Naive thymus-derived CD8-positive, alpha-beta T cell (primary cell): ENCODE measurements at regions of chr9 and their contacts with region 1.

Region 1: GRCh38 chr9:4740638-4741364 is at the start of gene AK3:
- DNase-seq: peak; percentile 81 to 93 (median 86)
- ATAC-seq: peak; percentile 90 to 93
- H3K4me3 Mint-ChIP-seq: peak within 1 kb of the TSS; percentile 85 to 99 (median 94)
- H3K27ac Mint-ChIP-seq: peak within 1 kb of the TSS; percentile 90 to 99 (median 96)
- H3K4me1 Mint-ChIP-seq: peaks cover 15 to 46% (median 41%) of the 10 kb centered on the region in 4 donors
- H3K27me3 Mint-ChIP-seq: no peaks in the 10 kb centered on the region
- polyA plus RNA-seq, gene AK3: 41.6 to 58.8 (median 46.1) TPM

Region 2: DNA sequence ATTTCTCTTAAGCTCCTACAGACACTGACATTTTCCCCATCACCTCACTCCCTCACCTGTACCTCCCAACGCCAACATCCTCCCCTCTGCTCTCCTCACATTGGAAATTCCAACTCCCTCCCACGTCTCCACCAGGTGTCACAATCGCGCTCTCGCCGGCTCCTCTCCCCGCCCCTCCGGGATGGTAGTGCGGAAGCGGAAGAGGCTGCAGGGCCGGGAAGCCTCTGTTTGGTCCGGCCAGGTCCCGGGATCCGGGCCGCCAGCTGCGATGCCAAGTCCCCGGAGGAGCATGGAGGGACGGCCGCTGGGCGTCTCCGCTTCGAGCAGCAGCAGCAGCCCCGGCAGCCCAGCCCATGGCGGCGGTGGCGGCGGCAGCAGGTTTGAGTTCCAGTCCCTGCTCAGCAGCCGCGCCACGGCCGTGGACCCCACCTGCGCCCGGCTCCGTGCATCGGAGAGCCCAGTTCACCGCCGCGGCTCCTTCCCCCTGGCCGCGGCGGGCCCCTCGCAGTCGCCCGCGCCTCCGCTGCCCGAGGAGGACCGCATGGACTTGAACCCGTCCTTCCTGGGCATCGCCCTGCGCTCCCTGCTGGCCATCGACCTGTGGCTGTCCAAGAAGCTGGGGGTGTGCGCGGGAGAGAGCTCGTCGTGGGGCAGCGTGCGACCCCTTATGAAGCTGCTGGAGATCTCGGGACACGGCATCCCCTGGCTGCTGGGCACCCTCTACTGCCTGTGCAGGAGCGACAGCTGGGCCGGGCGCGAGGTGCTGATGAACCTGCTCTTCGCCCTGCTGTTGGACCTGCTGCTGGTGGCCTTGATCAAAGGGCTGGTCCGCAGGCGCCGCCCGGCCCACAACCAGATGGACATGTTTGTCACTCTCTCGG is 78.5 kb before region 1 on chr9 and contains the start of gene PLPP6:
- POLR2A ChIA-PET with region 1: interaction called, 42 read pairs
- DNase-seq: peak; percentile 60 to 90 (median 76)
- ATAC-seq: peak; percentile 68 to 74
- H3K4me3 Mint-ChIP-seq: peak within 1 kb of the TSS; percentile 89 to 99 (median 94)
- H3K27ac Mint-ChIP-seq: peak within 1 kb of the TSS; percentile 95 to 99 (median 96)
- H3K4me1 Mint-ChIP-seq: peaks cover 32 to 68% (median 59%) of the 10 kb centered on the region in 4 donors
- H3K27me3 Mint-ChIP-seq: peaks cover 0 to 6% (median 0%) of the 10 kb centered on the region in 5 donors
- polyA plus RNA-seq, gene PLPP6: 4.9 to 6.1 (median 5.8) TPM

Region 3: GRCh38 chr9:4679268-4680172 is 61.3 kb before region 1 on chr9 and contains the start of gene CDC37L1:
- POLR2A ChIA-PET with region 1: interaction called, 47 read pairs
- DNase-seq: peak; percentile 96 to 100 (median 99)
- ATAC-seq: peak; percentile 90 to 93
- H3K4me3 Mint-ChIP-seq: no peak within 1 kb of the TSS
- H3K27ac Mint-ChIP-seq: no peak within 1 kb of the TSS
- H3K4me1 Mint-ChIP-seq: peaks cover 12 to 13% (median 12%) of the 10 kb centered on the region in 4 donors
- H3K27me3 Mint-ChIP-seq: peaks cover 0 to 5% (median 0%) of the 10 kb centered on the region in 5 donors
- polyA plus RNA-seq, gene CDC37L1: 18.5 to 19.2 (median 19.1) TPM

Region 4: GRCh38 chr9:4689687-4690104 is 51.1 kb before region 1 on chr9:
- POLR2A ChIA-PET with region 1: no interaction called
- DNase-seq: no peak
- ATAC-seq: no peak
- H3K4me3 Mint-ChIP-seq: peak overlapping the region in 1 of 10 donors; percentile 18
- H3K27ac Mint-ChIP-seq: peak overlapping the region in 5 of 10 donors; percentile 40 to 78 (median 55)
- H3K4me1 Mint-ChIP-seq: peaks cover 19 to 46% (median 31%) of the 10 kb centered on the region in 4 donors
- H3K27me3 Mint-ChIP-seq: no peaks in the 10 kb centered on the region

Region 5: GRCh38 chr9:4769321-4770080 is 28.7 kb after region 1 on chr9:
- POLR2A ChIA-PET with region 1: no interaction called
- DNase-seq: no peak
- ATAC-seq: no peak
- H3K4me3 Mint-ChIP-seq: no peak overlapping the region
- H3K27ac Mint-ChIP-seq: no peak overlapping the region
- H3K4me1 Mint-ChIP-seq: peaks cover 0 to 2% (median 0%) of the 10 kb centered on the region in 4 donors
- H3K27me3 Mint-ChIP-seq: peaks cover 0 to 3% (median 0%) of the 10 kb centered on the region in 5 donors

Region 6: GRCh38 chr9:4792572-4793458 is 52.0 kb after region 1 on chr9 and contains the start of gene RCL1:
- POLR2A ChIA-PET with region 1: interaction called, 16 read pairs
- DNase-seq: peak; percentile 93 to 98 (median 96)
- ATAC-seq: peak; percentile 92 to 93
- H3K4me3 Mint-ChIP-seq: peak within 1 kb of the TSS; percentile 94 to 98 (median 96)
- H3K27ac Mint-ChIP-seq: peak within 1 kb of the TSS; percentile 87 to 98 (median 96)
- H3K4me1 Mint-ChIP-seq: peaks cover 23 to 52% (median 43%) of the 10 kb centered on the region in 4 donors
- H3K27me3 Mint-ChIP-seq: peaks cover 0 to 1% (median 0%) of the 10 kb centered on the region in 5 donors
- polyA plus RNA-seq, gene RCL1: 18.7 to 22.2 (median 20.2) TPM

Region 7: GRCh38 chr9:5301544-5301943 is 560.7 kb after region 1 on chr9:
- POLR2A ChIA-PET with region 1: no interaction called
- DNase-seq: peak in 5 of 10 donors; percentile 8 to 32 (median 23)
- ATAC-seq: peak in 1 of 2 donors; percentile 25
- H3K4me3 Mint-ChIP-seq: peak overlapping the region; percentile 32 to 82 (median 64)
- H3K27ac Mint-ChIP-seq: peak overlapping the region; percentile 33 to 71 (median 56)
- H3K4me1 Mint-ChIP-seq: peaks cover 14 to 33% (median 26%) of the 10 kb centered on the region in 4 donors
- H3K27me3 Mint-ChIP-seq: no peaks in the 10 kb centered on the region